GM12878 (cell line): ENCODE measurements at regions of chr11 and their contacts with region 1.

Region 1: DNA sequence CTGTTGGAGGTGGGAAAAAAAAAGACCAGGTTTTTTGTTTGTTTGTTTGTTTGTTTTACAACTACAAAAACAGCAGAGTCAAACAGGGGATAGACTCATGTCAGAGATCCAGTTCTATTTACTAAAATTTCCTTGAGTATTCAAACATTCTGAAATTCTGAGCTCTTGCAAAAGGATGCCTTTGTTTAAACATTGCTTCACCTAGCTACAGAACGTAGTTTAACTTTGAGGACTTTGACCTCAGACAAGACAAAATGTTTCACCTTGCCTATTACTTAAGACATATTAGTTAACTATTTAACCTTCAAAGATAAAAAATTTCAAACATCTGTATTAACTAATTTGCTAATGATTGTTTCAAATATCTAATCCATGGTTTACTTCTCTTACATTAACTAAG is 36.1 kb upstream of the GLYATL2 start:
- DNase-seq: no peak
- ATAC-seq: no peak
- H3K4me3 ChIP-seq: no peak overlapping the region
- H3K27ac ChIP-seq: no peak overlapping the region
- H3K4me1 ChIP-seq: no peaks in the 10 kb centered on the region
- H3K27me3 ChIP-seq: no peaks in the 10 kb centered on the region
- CTCF ChIP-seq: no peak
- EP300 ChIP-seq: no peak
- POLR2A ChIP-seq: no peak
- RAD21 ChIP-seq: no peak

Region 2: GRCh38 chr11:58829786-58830185 is 50.8 kb before region 1 on chr11:
- CTCF ChIA-PET with region 1: no interaction called
- POLR2A ChIA-PET with region 1: no interaction called
- RAD21 ChIA-PET with region 1: no interaction called
- SMC1A ChIA-PET with region 1: no interaction called
- in situ Hi-C with region 1: no loop called
- intact Hi-C with region 1: loop called (anchors 5 kb)
- DNase-seq: no peak
- ATAC-seq: no peak
- H3K4me3 ChIP-seq: no peak overlapping the region
- H3K27ac ChIP-seq: no peak overlapping the region
- H3K4me1 ChIP-seq: no peaks in the 10 kb centered on the region
- H3K27me3 ChIP-seq: no peaks in the 10 kb centered on the region
- CTCF ChIP-seq: no peak
- EP300 ChIP-seq: no peak
- POLR2A ChIP-seq: no peak
- RAD21 ChIP-seq: no peak